A673 (cell line): ENCODE measurements at regions of chr14 and their contacts with region 1.

Region 1: GRCh38 chr14:22872033-22872832 is 693 bp downstream of the LRP10 start:
- DNase-seq: peak; percentile 83
- H3K4me3 ChIP-seq: peak overlapping the region; percentile 96
- H3K27ac ChIP-seq: peak overlapping the region; percentile 75
- H3K4me1 ChIP-seq: peaks cover 12% of the 10 kb centered on the region
- H3K27me3 ChIP-seq: no peaks in the 10 kb centered on the region
- CTCF ChIP-seq: peak; percentile 97

Region 2: DNA sequence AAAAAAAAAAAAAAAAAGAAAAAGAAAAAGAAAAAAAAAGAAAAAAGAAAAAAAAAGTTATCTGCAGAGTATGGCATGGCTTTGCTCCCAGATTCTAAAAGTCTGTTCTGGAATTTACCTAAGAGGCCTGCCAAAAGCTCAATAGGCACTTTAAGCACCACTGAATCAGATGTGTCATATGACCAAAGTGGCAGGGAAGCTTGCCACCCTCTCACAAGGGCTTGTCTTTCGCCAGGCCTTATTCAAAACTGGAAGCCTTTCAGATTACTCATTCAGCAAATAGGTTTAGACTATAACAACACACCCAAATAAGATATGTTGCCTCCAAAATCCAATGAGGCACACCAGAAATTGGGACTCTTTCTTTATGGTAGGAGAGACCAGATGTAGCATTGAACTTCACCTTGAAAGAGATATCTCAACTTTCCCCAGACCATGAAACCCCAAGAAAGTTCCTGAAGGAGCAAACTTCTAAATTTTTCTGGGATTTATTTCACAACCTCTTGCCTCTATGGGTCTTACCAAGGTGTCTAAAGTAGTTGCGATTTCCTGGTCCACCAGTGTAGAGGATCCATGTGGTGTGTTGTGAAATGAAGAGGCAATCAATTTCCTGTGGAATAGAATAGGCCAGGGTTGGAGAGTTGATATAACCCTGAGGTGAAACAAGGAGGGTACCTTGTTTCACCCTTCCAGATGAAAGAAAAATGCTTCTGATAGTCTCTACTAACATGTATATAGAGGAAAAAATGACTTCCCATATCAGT is 502.0 kb before region 1 on chr14:
- CTCF ChIA-PET with region 1: interaction called, 11 read pairs
- POLR2A ChIA-PET with region 1: no interaction called
- intact Hi-C with region 1: no loop called
- DNase-seq: no peak
- H3K4me3 ChIP-seq: no peak overlapping the region
- H3K27ac ChIP-seq: no peak overlapping the region
- H3K4me1 ChIP-seq: no peaks in the 10 kb centered on the region
- H3K27me3 ChIP-seq: no peaks in the 10 kb centered on the region
- CTCF ChIP-seq: no peak

Region 3: DNA sequence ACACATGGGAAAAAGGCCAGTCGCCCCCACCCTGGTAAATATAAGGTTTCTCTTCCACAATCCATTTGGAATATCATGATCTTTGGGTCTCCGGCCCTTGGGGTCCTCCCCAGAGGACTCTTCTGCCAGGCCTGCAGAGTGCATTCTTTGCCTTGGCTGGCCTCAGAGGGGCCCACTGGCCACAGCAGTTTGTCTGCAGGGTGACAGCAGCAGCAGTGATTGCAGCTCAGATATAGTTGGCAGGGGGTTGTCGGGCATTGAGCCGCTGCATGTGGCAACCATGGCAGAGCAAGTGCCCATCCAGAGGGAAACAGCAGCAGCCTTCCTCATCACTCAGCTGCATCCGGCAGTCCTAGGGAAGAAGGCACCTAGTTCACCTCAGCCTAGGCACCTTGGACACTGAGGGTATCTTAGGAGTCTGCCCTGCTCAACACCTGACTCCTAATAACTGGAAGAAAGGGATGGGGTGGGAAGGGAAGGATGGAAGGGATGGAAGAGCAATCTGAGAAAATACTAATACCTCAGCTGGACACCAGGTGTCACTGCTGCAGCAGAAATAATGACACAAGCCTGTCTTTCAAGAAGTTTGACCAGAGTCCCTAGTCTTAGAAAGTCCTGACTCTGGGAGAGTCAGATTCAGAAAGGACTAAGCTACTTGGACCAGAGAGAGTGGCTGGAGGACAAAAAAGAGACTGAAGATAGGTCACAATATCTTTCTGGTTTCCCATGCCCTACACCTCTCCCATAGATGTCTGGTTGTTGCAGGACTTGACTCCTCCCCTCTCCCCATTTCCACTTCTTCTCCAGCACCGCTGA is 101.2 kb after region 1 on chr14:
- CTCF ChIA-PET with region 1: no interaction called
- POLR2A ChIA-PET with region 1: no interaction called
- intact Hi-C with region 1: no loop called
- DNase-seq: peak; percentile 78
- H3K4me3 ChIP-seq: no peak overlapping the region
- H3K27ac ChIP-seq: no peak overlapping the region
- H3K4me1 ChIP-seq: peaks cover 22% of the 10 kb centered on the region
- H3K27me3 ChIP-seq: no peaks in the 10 kb centered on the region
- CTCF ChIP-seq: peak; percentile 73

Region 4: GRCh38 chr14:24241829-24242443 is 1369.7 kb after region 1 on chr14:
- CTCF ChIA-PET with region 1: no interaction called
- POLR2A ChIA-PET with region 1: no interaction called
- intact Hi-C with region 1: no loop called
- DNase-seq: peak; percentile 96
- H3K4me3 ChIP-seq: peak overlapping the region; percentile 57
- H3K27ac ChIP-seq: peak overlapping the region; percentile 95
- H3K4me1 ChIP-seq: peaks cover 10% of the 10 kb centered on the region
- H3K27me3 ChIP-seq: no peaks in the 10 kb centered on the region
- CTCF ChIP-seq: peak; percentile 47